ENCODE measurements at regions of chr17 and their contacts with region 1.

Region 1: GRCh38 chr17:67488161-67488560 is 111.1 kb downstream of the PITPNC1 start:
- DNase-seq: no peak
- ATAC-seq: no peak
- H3K4me3 ChIP-seq: no peak overlapping the region
- H3K4me3 Mint-ChIP-seq: peak overlapping the region; percentile 84
- H3K27ac ChIP-seq: no peak overlapping the region
- H3K27ac Mint-ChIP-seq: peak overlapping the region; percentile 86 to 93
- H3K4me1 ChIP-seq: peaks cover 70% of the 10 kb centered on the region
- H3K4me1 Mint-ChIP-seq: peaks cover 81 to 85% of the 10 kb centered on the region in 2 donors
- H3K27me3 ChIP-seq: no peaks in the 10 kb centered on the region
- H3K27me3 Mint-ChIP-seq: no peaks in the 10 kb centered on the region
- CTCF ChIP-seq: no peak

Region 2: GRCh38 chr17:67376737-67377487 is 111.2 kb before region 1 on chr17 and contains the start of gene PITPNC1:
- intact Hi-C with region 1: no loop called
- DNase-seq: peak; percentile 86 to 94
- ATAC-seq: peak; percentile 72 to 88 (median 83)
- H3K4me3 ChIP-seq: peak within 1 kb of the TSS; percentile 73
- H3K4me3 Mint-ChIP-seq: peak within 1 kb of the TSS; percentile 96
- H3K27ac ChIP-seq: peak within 1 kb of the TSS; percentile 89
- H3K27ac Mint-ChIP-seq: peak within 1 kb of the TSS; percentile 91 to 92
- H3K4me1 ChIP-seq: peaks cover 37% of the 10 kb centered on the region
- H3K4me1 Mint-ChIP-seq: peaks cover 33 to 35% of the 10 kb centered on the region in 2 donors
- H3K27me3 ChIP-seq: no peaks in the 10 kb centered on the region
- H3K27me3 Mint-ChIP-seq: no peaks in the 10 kb centered on the region
- CTCF ChIP-seq: peak; percentile 13
- total RNA-seq, gene PITPNC1: 150 to 185 (median 169) TPM

Region 3: DNA sequence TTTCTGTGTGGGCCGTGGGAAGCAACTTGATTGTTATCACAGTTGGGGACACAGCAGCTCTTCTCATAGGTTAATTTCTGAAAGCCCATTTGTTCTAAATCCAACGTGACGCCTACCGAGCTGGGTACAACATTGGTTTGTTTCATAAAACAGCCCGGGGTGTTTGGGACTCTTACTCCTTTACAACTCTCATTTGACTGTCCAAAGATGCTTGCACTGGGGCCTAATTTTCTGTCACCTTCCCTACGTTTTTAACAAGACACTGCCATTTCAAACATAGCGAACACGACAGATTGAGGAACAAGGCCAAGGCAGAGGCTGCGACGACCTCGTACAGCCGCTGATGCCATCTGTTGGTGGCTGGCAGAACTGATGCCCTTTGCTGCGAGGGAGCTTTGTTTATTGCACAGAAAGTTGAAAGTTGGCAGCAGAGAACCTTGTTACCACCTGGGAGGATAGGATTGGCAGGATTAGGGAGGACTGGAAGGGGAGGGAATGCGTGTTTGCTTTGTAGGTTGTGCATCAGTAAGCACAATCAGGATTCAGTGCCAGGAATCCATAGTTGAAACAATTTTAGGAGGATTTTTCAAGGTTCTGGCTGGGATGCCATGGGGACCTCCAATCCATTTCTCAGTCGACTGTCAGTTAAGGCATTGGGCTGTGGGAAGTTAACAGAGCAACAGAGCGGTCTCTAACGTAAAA is 12.8 kb before region 1 on chr17:
- intact Hi-C with region 1: loop called (anchors 1 kb)
- DNase-seq: peak; percentile 79 to 95
- ATAC-seq: peak; percentile 78 to 95 (median 85)
- H3K4me3 ChIP-seq: no peak overlapping the region
- H3K4me3 Mint-ChIP-seq: peak overlapping the region; percentile 65
- H3K27ac ChIP-seq: peak overlapping the region; percentile 83
- H3K27ac Mint-ChIP-seq: peak overlapping the region; percentile 89 to 94
- H3K4me1 ChIP-seq: peaks cover 66% of the 10 kb centered on the region
- H3K4me1 Mint-ChIP-seq: peaks cover 61 to 62% of the 10 kb centered on the region in 2 donors
- H3K27me3 ChIP-seq: no peaks in the 10 kb centered on the region
- H3K27me3 Mint-ChIP-seq: no peaks in the 10 kb centered on the region
- CTCF ChIP-seq: peak; percentile 91

Region 4: DNA sequence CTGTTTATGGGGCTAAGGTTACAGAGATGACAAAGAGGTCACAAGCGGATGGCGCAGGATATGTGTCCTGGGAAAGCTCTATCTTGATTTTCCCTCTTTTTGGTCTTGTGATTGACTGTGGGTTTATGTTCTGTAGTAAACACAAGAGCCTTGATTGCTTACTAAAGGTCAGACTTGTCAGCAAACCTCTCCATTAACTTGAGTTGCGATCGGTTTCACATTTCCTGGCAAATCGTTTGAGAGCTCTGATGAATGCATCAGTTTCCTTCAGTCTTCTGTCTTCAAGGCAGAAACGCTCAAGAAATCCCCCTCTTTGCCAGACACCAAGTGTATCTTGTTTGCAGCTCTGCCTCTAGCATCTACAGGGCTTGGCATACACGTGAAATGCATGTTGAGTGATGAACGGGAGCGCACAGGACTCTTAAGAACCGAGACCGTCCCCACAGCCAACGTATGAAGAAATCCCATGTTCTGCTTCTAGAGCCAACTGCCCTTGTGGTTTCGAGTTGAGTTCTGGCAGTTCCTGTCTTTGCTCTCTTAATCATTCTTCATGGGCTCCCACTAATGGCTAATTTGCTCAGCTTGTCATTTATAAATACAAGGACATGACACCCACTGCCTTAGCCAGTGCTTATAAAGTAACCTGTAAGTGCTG is 32.2 kb after region 1 on chr17:
- intact Hi-C with region 1: loop called (anchors 5 kb)
- DNase-seq: peak in 1 of 2 donors; percentile 27
- ATAC-seq: peak; percentile 66 to 73 (median 70)
- H3K4me3 ChIP-seq: no peak overlapping the region
- H3K4me3 Mint-ChIP-seq: peak overlapping the region; percentile 80
- H3K27ac ChIP-seq: no peak overlapping the region
- H3K27ac Mint-ChIP-seq: peak overlapping the region; percentile 82 to 87
- H3K4me1 ChIP-seq: peaks cover 20% of the 10 kb centered on the region
- H3K4me1 Mint-ChIP-seq: peaks cover 68 to 69% of the 10 kb centered on the region in 2 donors
- H3K27me3 ChIP-seq: no peaks in the 10 kb centered on the region
- H3K27me3 Mint-ChIP-seq: no peaks in the 10 kb centered on the region
- CTCF ChIP-seq: no peak

Region 5: GRCh38 chr17:67544364-67544955 is 56.3 kb after region 1 on chr17:
- intact Hi-C with region 1: no loop called
- DNase-seq: no peak
- ATAC-seq: no peak
- H3K4me3 ChIP-seq: no peak overlapping the region
- H3K4me3 Mint-ChIP-seq: no peak overlapping the region
- H3K27ac ChIP-seq: no peak overlapping the region
- H3K27ac Mint-ChIP-seq: peak overlapping the region in 1 of 2 donors; percentile 55
- H3K4me1 ChIP-seq: peaks cover 4% of the 10 kb centered on the region
- H3K4me1 Mint-ChIP-seq: peaks cover 42 to 53% of the 10 kb centered on the region in 2 donors
- H3K27me3 ChIP-seq: no peaks in the 10 kb centered on the region
- H3K27me3 Mint-ChIP-seq: no peaks in the 10 kb centered on the region
- CTCF ChIP-seq: no peak

Measured in natural killer cell (primary cell).